Activated CD4-positive, alpha-beta T cell treated with anti-CD3 and anti-CD28 coated beads, Interleukin-2, amount 10 ng/mL, durations not matched to agents 24 days and 14 days (primary cell): ENCODE measurements at regions of chr4 and their contacts with region 1.

Region 1: DNA sequence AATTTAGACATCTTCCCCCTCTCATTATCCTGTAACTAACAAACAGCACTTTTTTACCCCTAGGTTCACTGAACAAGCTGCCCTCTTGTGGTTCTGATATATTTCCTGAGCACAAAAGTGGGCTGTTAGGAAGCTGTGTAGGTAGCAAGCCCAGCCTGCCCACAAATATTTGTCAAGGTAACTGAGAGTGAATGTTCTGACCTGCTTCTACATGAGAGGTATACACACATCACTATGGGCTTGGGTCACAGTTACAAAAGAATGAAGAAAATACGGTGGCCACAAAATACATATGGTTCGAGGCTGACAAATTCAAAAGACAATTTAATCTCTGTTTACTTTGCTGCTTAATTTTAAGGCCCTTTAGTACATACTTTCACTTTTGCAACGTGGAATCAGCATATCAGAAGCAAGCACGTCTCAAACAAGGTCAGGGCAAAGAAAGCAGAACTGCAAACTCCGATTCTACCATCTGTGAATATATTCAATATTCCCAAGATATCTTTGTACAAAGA is 78.7 kb downstream of the RBM47 start:
- DNase-seq: peak; percentile 82
- H3K4me3 Mint-ChIP-seq: peak overlapping the region; percentile 84
- H3K27ac Mint-ChIP-seq: peak overlapping the region; percentile 84
- H3K4me1 Mint-ChIP-seq: peaks cover 40% of the 10 kb centered on the region
- H3K27me3 Mint-ChIP-seq: no peaks in the 10 kb centered on the region

Region 2: DNA sequence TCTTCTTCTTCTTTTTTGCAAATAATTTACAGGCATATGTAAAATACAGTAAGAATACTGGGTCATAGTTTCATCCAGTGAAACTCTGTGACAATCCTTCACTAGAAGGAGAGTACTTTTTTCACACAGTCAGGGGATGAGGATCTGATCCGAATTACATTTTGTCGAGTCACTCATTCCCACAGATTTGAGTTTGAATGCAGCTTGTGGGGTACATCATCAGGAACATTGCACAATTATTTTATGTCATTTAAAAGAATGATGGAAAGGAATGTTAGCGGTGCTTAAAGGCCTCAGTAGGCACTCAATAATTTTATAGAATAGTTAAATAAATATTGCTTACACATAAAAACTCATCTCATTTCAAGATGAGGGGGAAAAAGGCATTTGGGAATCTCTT is 127.3 kb before region 1 on chr4:
- intact Hi-C with region 1: no loop called
- DNase-seq: no peak
- H3K4me3 Mint-ChIP-seq: no peak overlapping the region
- H3K27ac Mint-ChIP-seq: no peak overlapping the region
- H3K4me1 Mint-ChIP-seq: peaks cover 9% of the 10 kb centered on the region
- H3K27me3 Mint-ChIP-seq: no peaks in the 10 kb centered on the region

Region 3: DNA sequence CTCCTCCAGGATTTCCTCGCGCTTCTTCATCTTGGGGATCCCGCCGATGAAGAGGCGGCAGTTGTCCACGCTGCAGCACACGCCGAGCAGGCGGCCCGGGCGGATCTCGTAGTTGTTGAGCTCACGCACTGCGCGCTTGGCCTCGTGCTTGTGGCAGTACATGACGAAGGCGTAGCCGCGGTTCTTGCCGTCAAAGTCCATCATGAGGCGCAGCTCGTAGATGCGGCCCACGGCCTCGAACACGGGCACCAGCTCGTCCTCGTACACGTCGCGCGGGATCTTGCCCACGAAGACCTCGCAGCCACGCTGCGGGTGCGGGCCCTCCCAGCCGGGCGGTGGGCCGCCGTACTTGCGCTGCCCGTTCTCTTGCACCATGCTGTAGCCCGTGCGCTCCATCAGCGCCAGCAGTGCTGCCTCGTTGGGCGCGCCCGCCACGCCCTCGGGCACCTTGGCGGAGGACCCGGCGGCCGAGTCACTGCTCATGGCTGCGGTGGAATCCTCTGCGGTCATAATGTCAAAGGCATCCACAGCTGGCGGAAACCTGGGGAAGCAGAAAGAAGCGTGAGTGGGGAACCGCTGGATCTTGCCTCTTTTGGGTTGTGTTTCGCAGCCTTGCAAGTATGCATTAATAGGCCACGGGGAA is 112.5 kb before region 1 on chr4:
- intact Hi-C with region 1: loop called (anchors 10 kb)
- DNase-seq: no peak
- H3K4me3 Mint-ChIP-seq: peak overlapping the region; percentile 33
- H3K27ac Mint-ChIP-seq: no peak overlapping the region
- H3K4me1 Mint-ChIP-seq: peaks cover 51% of the 10 kb centered on the region
- H3K27me3 Mint-ChIP-seq: no peaks in the 10 kb centered on the region

Region 4: GRCh38 chr4:40466789-40467188 is 84.2 kb before region 1 on chr4:
- intact Hi-C with region 1: loop called (anchors 5 kb)
- DNase-seq: no peak
- H3K4me3 Mint-ChIP-seq: no peak overlapping the region
- H3K27ac Mint-ChIP-seq: peak overlapping the region; percentile 71
- H3K4me1 Mint-ChIP-seq: peaks cover 18% of the 10 kb centered on the region
- H3K27me3 Mint-ChIP-seq: no peaks in the 10 kb centered on the region

Region 5: DNA sequence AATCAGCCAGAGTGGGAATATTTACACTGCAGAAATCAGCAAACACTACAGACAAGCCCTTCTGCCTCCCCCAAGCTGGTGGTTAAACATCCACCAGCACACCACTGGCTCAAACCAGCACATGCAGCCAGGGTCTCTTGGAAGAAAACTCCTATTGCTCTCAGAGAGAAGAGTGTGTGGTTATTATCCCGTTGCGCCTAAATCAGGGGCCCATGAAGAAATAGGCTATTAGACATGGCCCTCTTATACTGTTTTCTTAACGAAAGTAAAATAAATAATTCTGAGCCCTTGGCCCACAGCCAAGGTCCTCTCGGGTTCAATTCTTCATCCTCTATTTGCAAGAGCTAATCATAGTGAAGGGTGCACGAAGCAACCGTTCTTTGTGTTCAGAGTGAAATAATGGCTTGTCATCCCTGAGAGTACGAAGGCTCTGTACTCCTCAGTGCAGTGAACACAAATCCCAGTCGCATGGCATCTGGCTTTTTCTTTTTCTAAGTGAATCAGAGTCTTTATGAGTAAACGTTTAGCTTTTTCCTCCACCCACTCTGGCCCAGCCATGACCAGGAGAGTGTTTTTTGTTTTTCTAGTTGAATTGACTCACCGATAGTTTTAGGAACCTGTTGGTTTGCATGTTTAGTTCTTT is 112.1 kb after region 1 on chr4:
- intact Hi-C with region 1: loop called (anchors 2 kb)
- DNase-seq: no peak
- H3K4me3 Mint-ChIP-seq: peak overlapping the region; percentile 36
- H3K27ac Mint-ChIP-seq: peak overlapping the region; percentile 93
- H3K4me1 Mint-ChIP-seq: peaks cover 29% of the 10 kb centered on the region
- H3K27me3 Mint-ChIP-seq: no peaks in the 10 kb centered on the region

Region 6: GRCh38 chr4:40749717-40750460 is 198.9 kb after region 1 on chr4 and contains the start of gene NSUN7:
- intact Hi-C with region 1: no loop called
- DNase-seq: peak; percentile 77
- H3K4me3 Mint-ChIP-seq: peak within 1 kb of the TSS; percentile 75
- H3K27ac Mint-ChIP-seq: no peak within 1 kb of the TSS
- H3K4me1 Mint-ChIP-seq: peaks cover 6% of the 10 kb centered on the region
- H3K27me3 Mint-ChIP-seq: peaks cover 50% of the 10 kb centered on the region
- total RNA-seq, gene NSUN7: 0.12 TPM in 1 of 2 replicates, not detected in the other